Adrenal gland (tissue), 19 donors: ENCODE measurements at regions of chr12 and their contacts with region 1.

Region 1: GRCh38 chr12:103860903-103861763 is 20.1 kb upstream of the NT5DC3 start:
- DNase-seq: no peak
- H3K4me3 ChIP-seq: no peak overlapping the region
- H3K27ac ChIP-seq: no peak overlapping the region
- H3K4me1 ChIP-seq: no peaks in the 10 kb centered on the region
- H3K27me3 ChIP-seq: no peaks in the 10 kb centered on the region
- CTCF ChIP-seq: no peak
- POLR2A ChIP-seq: no peak

Region 2: GRCh38 chr12:103353913-103354312 is 507.2 kb before region 1 on chr12:
- intact Hi-C with region 1: no loop called
- DNase-seq: no peak
- H3K4me3 ChIP-seq: no peak overlapping the region
- H3K27ac ChIP-seq: no peak overlapping the region
- H3K4me1 ChIP-seq: no peaks in the 10 kb centered on the region
- H3K27me3 ChIP-seq: no peaks in the 10 kb centered on the region
- CTCF ChIP-seq: no peak
- POLR2A ChIP-seq: no peak

Region 3: DNA sequence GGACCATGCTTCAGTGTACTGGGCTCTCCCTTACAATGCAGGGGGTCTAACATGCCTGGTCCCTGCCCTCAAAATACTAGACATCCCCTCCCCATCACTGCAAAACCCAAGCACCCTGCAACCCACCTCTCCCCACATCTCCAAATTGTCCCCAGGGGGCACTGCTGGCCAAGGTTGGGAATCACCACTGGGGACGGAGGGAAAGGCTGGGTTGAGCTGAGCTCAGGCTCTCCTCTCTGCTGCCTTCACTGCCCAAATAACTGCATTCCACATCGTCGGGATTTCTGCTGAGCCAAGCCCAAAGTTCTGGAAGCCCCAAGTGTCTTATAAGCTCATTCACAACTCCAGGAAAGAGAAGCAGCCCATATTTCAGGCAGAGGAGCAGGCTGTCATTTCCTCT is 89.7 kb before region 1 on chr12:
- intact Hi-C with region 1: loop called in 1 of 2 experiments (anchors 10 kb)
- DNase-seq: peak; percentile 32 to 66 (median 57)
- H3K4me3 ChIP-seq: no peak overlapping the region
- H3K27ac ChIP-seq: no peak overlapping the region
- H3K4me1 ChIP-seq: peaks cover 10 to 12% of the 10 kb centered on the region in 2 donors
- H3K27me3 ChIP-seq: no peaks in the 10 kb centered on the region
- CTCF ChIP-seq: peak; percentile 34 to 80 (median 66)
- POLR2A ChIP-seq: no peak